ENCODE measurements at regions of chr17 and their contacts with region 1.

Region 1: DNA sequence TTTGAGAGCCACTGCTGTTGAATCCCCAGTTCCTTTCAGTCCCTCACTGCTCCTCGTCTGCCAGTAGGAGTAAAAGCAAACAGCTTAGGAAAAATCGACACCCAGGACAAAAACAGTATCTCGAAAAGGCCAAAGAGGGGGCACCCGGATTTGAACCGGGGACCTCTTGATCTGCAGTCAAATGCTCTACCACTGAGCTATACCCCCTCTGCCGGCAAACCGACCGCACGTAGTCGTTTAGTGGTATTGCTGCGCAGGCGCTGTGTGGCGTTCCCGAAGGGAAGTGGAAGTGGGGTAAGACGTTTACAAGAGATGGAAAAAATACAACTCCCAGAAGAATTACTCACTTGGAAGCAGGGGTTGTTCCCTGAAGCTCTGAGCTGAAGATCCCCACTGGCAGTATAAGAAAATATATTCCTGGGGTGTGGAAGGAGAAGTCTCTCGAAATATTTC is 2.2 kb upstream of the PLXDC1 start:
- DNase-seq: peak; percentile 91
- H3K4me3 Mint-ChIP-seq: peak overlapping the region; percentile 95
- H3K27ac Mint-ChIP-seq: peak overlapping the region; percentile 95
- H3K4me1 Mint-ChIP-seq: peaks cover 43% of the 10 kb centered on the region
- H3K27me3 Mint-ChIP-seq: peaks cover 20% of the 10 kb centered on the region

Region 2: GRCh38 chr17:38982858-38983746 is 170.5 kb before region 1 on chr17:
- CTCF ChIA-PET with region 1: interaction called, 66 read pairs
- POLR2A ChIA-PET with region 1: interaction called, 3 read pairs
- DNase-seq: peak; percentile 68
- H3K4me3 Mint-ChIP-seq: no peak overlapping the region
- H3K27ac Mint-ChIP-seq: no peak overlapping the region
- H3K4me1 Mint-ChIP-seq: peaks cover 9% of the 10 kb centered on the region
- H3K27me3 Mint-ChIP-seq: peaks cover 3% of the 10 kb centered on the region

Region 3: DNA sequence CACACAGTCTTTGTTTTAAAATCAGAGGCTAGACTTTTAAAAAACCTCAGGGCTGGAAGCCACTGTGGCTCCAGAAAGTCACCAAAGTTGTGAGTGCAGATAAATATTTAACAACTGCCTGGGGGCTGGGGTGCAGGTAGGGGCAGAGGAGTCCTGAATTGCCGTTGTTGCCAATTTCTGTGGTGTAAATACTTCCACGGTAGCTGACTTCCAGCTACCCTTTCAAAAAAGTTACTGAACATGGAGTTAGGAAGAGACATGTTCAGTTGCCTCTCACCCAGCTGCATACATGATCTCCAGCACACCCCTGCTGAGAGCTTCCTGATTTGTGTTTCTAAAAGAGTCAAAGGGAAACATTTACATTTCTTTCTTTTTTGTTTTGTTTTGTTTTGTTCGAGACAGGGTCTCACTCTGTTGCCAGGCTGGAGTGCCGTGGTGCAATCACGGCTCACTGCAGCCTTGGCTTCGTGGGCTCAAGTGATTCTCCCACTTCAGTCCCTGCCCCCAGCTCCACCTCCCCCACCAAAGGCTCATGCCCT is 60.9 kb before region 1 on chr17:
- CTCF ChIA-PET with region 1: interaction called, 12 read pairs
- POLR2A ChIA-PET with region 1: no interaction called
- DNase-seq: peak; percentile 46
- H3K4me3 Mint-ChIP-seq: peak overlapping the region; percentile 44
- H3K27ac Mint-ChIP-seq: peak overlapping the region; percentile 99
- H3K4me1 Mint-ChIP-seq: peaks cover 69% of the 10 kb centered on the region
- H3K27me3 Mint-ChIP-seq: no peaks in the 10 kb centered on the region

Region 4: GRCh38 chr17:39099663-39100286 is 53.9 kb before region 1 on chr17:
- CTCF ChIA-PET with region 1: interaction called, 11 read pairs
- POLR2A ChIA-PET with region 1: no interaction called
- DNase-seq: no peak
- H3K4me3 Mint-ChIP-seq: no peak overlapping the region
- H3K27ac Mint-ChIP-seq: no peak overlapping the region
- H3K4me1 Mint-ChIP-seq: peaks cover 56% of the 10 kb centered on the region
- H3K27me3 Mint-ChIP-seq: no peaks in the 10 kb centered on the region

Region 5: DNA sequence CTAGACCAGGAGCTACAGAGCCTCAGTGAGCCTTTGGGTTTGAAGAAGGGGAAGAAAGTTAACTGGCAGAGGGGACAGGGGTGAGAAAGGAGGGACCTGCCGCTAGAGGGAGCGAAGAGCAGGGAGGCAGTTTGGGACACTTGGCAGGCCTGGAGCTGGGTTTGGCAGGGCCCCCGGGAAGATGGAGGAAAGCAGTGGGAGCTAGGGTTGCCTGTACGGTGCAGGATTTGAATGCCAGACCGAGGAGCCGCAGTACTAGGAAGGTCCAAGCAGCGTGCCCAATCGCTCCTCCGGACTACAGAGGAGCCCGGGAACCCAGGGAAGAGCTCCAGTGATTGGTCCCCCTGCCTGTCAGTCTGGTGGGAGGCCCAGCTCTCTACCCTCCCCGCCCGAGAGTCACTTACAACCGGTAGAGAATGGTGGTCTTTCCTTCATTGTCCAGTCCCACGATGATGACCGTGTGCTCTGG is 11.1 kb after region 1 on chr17:
- CTCF ChIA-PET with region 1: interaction called, 94 read pairs
- POLR2A ChIA-PET with region 1: no interaction called
- DNase-seq: peak; percentile 81
- H3K4me3 Mint-ChIP-seq: peak overlapping the region; percentile 81
- H3K27ac Mint-ChIP-seq: no peak overlapping the region
- H3K4me1 Mint-ChIP-seq: peaks cover 38% of the 10 kb centered on the region
- H3K27me3 Mint-ChIP-seq: peaks cover 29% of the 10 kb centered on the region

Region 6: DNA sequence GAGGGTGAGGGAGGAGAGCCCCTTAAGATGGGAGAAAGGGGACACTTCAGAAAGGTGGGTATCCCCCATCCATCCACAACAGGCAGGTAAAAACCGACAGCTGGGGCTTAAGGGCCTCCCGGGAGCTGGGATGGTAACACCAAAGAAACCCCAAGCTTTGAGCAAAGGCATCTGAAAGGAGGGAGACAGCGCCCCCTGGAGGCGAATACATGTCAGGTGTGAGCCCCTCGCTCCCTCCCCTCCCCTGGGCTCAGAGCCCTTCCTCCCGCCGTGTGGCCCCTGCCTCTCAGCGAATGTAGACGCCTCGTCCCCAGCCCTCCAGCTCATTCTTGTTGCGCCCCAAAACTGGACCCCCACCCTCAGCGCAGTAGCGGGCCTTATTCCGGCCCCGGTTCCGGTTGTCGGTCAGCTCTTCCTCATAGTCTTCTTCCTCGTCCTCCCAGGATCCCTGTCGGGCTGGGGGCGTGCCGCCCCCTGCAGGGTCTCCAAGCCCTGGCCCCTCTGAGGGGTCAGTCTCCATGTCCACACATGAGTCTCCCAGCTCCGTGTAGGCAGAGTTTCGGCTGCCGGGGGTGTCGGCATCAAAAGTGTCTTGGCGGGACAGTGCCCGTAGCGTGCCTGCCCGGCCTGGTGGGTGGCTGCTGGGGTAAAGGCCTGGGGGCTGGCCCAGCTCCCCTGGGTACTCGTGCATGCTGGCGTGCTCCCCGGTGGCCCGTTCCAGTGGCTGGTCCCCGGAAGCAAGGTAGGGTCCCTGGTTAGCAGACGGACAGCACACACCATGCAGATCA is 21.5 kb after region 1 on chr17:
- CTCF ChIA-PET with region 1: interaction called, 26 read pairs
- POLR2A ChIA-PET with region 1: no interaction called
- DNase-seq: peak; percentile 83
- H3K4me3 Mint-ChIP-seq: no peak overlapping the region
- H3K27ac Mint-ChIP-seq: no peak overlapping the region
- H3K4me1 Mint-ChIP-seq: peaks cover 22% of the 10 kb centered on the region
- H3K27me3 Mint-ChIP-seq: peaks cover 5% of the 10 kb centered on the region

Region 7: DNA sequence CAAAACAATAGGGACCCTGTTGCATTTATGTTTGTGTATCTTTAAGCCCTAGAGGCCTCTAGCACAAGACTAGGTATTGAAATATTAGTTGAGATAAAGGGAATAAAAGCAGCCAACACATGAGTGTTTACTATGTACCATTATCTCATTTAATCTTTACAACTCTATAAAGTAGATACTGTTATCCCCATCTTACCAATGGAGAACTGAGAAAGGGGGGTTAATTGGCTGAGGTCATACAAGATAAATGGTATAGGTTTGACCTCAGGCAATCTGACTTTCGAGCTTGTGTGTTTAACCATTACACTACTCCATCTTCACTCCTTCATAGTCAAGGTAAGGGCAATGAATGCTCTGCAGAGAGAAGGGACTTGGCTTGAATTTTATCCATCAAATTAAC is 98.4 kb after region 1 on chr17:
- CTCF ChIA-PET with region 1: no interaction called
- POLR2A ChIA-PET with region 1: no interaction called
- DNase-seq: no peak
- H3K4me3 Mint-ChIP-seq: no peak overlapping the region
- H3K27ac Mint-ChIP-seq: no peak overlapping the region
- H3K4me1 Mint-ChIP-seq: no peaks in the 10 kb centered on the region
- H3K27me3 Mint-ChIP-seq: no peaks in the 10 kb centered on the region